Cardiac septum (tissue), 1 donor: ENCODE measurements at regions of chr21 and their contacts with region 1.

Region 1: GRCh38 chr21:31088315-31088714 is 50.0 kb upstream of the KRTAP19-8 start:
- DNase-seq: no peak

Region 2: GRCh38 chr21:30340441-30341241 is 747.7 kb before region 1 on chr21:
- intact Hi-C with region 1: loop called (anchors 2 kb)
- DNase-seq: no peak

Region 3: GRCh38 chr21:30444204-30444603 is 644.1 kb before region 1 on chr21:
- intact Hi-C with region 1: loop called (anchors 10 kb)
- DNase-seq: no peak

Region 4: GRCh38 chr21:30676737-30677136 is 411.6 kb before region 1 on chr21:
- intact Hi-C with region 1: no loop called
- DNase-seq: no peak

Region 5: DNA sequence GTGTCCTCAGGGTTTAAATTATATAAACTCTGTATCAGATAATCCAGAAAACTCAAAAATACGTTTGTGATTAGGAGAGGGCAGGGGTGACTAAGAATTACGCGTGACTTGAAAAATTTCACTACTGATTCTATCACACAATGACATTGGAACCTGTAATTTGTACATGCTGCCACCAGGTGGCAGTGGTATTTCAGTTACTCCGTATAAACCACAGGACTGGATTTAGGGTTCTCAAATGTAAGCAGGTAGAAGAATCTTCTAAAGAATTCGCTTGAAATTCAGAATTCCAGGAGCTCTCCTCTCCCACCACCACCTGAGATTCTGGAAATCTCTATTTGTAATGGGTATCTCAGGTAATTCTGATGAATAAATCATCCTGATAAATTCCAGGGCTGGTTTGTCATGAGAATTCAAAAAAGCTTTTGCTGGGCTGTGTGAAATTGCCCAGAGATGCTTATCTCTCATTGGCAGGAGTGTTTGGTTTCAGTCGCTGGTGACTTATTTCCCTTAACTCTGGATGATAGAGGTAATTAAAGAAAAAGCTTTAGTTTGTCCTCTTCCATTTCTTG is 257.0 kb before region 1 on chr21:
- intact Hi-C with region 1: loop called (anchors 5 kb)
- DNase-seq: no peak

Region 6: DNA sequence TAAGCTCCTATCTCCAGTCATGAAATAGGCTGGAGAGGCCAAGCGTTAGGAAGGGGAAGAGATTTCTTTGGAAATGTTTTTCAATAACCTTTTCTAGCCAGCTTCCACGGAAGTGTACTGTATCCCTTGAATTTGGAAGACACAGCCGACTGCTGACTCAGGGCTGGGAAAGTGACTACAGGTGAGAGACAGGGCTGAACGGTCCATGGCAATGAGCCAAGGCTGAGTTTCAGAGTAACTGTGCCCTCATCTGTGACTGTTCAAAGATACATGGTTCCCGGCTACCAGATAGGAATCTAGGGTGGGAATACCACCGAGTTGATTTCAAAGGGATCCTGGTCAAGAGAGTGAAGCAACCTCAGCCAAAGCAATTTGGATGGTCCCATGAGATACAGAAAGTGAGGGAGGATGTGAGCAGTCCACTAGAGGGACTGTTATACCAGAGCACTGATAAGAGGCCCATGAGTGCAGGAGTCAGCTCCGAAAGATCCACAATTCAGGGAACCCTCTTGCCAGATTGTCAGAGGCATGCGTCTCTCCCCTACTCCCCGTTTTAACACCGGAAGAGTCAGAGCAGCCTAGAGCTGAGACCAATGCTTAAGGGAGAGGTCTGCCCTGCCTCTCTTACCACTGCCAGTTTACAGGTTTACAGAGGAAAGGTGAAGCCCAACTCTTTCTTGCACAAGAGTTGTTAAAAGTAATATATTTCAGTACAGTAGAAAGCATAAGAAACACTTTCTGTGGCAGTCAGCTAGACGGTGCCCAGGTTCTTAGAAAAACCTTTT is 46.8 kb before region 1 on chr21:
- intact Hi-C with region 1: no loop called
- DNase-seq: no peak